ENCODE measurements at regions of chr18 and their contacts with region 1.

Region 1: GRCh38 chr18:5057386-5058348 is 139.4 kb downstream of the AKAIN1 start:
- DNase-seq: peak; percentile 32
- ATAC-seq: peak; percentile 79
- H3K4me3 ChIP-seq: no peak overlapping the region
- H3K27ac ChIP-seq: no peak overlapping the region
- H3K4me1 ChIP-seq: no peaks in the 10 kb centered on the region; the same call in 1 of the 2 replicates
- H3K27me3 ChIP-seq: no peaks in the 10 kb centered on the region
- CTCF ChIP-seq: peak; percentile 72 to 93 (median 74); a peak in 4 of 6 replicates
- EP300 ChIP-seq: no peak
- POLR2A ChIP-seq: no peak
- RAD21 ChIP-seq: peak; percentile 92

Region 2: GRCh38 chr18:3771121-3771971 is 1286.3 kb before region 1 on chr18:
- CTCF ChIA-PET with region 1: interaction called, 32 read pairs
- POLR2A ChIA-PET with region 1: no interaction called
- RAD21 ChIA-PET with region 1: interaction called, 38 read pairs
- SMC1A ChIA-PET with region 1: interaction called, 14 read pairs
- in situ Hi-C with region 1: no loop called
- intact Hi-C with region 1: loop called (anchors 2 kb)
- DNase-seq: no peak
- ATAC-seq: peak; percentile 99
- H3K4me3 ChIP-seq: no peak overlapping the region
- H3K27ac ChIP-seq: no peak overlapping the region
- H3K4me1 ChIP-seq: no peaks in the 10 kb centered on the region
- H3K27me3 ChIP-seq: no peaks in the 10 kb centered on the region
- CTCF ChIP-seq: peak; percentile 79 to 87 (median 87)
- EP300 ChIP-seq: no peak
- POLR2A ChIP-seq: no peak
- RAD21 ChIP-seq: peak; percentile 72

Region 3: GRCh38 chr18:4181882-4182568 is 875.6 kb before region 1 on chr18:
- CTCF ChIA-PET with region 1: interaction called, 4 read pairs
- POLR2A ChIA-PET with region 1: no interaction called
- RAD21 ChIA-PET with region 1: interaction called, 4 read pairs
- SMC1A ChIA-PET with region 1: interaction called, 5 read pairs
- in situ Hi-C with region 1: no loop called
- intact Hi-C with region 1: loop called (anchors 5 kb)
- DNase-seq: no peak
- ATAC-seq: peak; percentile 84
- H3K4me3 ChIP-seq: no peak overlapping the region
- H3K27ac ChIP-seq: no peak overlapping the region
- H3K4me1 ChIP-seq: no peaks in the 10 kb centered on the region
- H3K27me3 ChIP-seq: no peaks in the 10 kb centered on the region
- CTCF ChIP-seq: peak in 1 of 3 experiments; percentile 35; a peak in 2 of 6 replicates
- EP300 ChIP-seq: no peak
- POLR2A ChIP-seq: no peak
- RAD21 ChIP-seq: peak; percentile 38

Region 4: DNA sequence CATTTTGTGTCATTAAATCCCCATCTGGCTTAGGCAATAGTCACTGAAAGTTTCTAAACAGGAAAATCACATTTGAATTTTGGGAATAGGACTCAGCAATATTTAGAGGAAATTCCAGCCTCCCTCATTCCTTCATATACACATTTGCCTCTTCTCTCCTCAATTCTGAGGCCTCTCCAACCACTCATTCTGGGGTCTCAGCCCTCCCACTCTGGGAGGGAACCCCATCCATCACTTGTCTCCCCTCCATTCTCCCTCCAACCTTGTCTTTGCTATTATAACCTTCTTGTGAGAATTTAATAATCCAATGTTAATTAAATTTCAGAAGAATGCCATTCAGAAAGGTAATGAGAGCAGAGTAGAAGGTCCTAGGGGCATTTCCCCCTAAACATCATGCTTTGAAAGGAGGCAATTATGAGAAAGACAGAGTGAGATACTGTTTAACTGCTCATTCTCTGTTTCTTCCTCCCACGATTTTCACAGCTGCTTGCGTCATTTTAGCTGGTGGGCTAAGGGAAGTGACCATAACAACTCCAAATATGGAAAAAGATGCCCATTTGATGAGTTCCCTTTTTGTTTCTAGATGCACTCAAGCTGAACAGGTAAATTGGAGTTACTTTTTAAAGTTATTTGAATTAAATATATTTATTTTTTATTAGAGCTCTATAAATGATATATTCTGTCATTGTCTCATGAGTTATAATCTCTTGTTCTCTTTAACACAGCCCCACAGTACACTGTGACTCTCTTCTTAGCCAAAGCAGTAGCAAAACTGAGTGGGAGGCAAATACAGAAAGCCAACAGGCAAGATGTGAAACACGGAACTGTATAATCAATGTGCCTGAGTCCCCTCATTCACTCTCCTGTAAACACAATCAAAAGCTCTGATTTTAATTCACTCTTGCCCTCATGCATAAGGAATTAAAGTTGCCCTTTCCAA is 737.7 kb before region 1 on chr18:
- CTCF ChIA-PET with region 1: no interaction called
- POLR2A ChIA-PET with region 1: no interaction called
- RAD21 ChIA-PET with region 1: interaction called, 6 read pairs
- SMC1A ChIA-PET with region 1: no interaction called
- in situ Hi-C with region 1: no loop called
- intact Hi-C with region 1: loop called (anchors 10 kb)
- DNase-seq: peak; percentile 64
- ATAC-seq: peak; percentile 91
- H3K4me3 ChIP-seq: no peak overlapping the region
- H3K27ac ChIP-seq: no peak overlapping the region; the same call in 1 of the 2 replicates
- H3K4me1 ChIP-seq: no peaks in the 10 kb centered on the region
- H3K27me3 ChIP-seq: no peaks in the 10 kb centered on the region
- CTCF ChIP-seq: no peak
- EP300 ChIP-seq: peak; percentile 88 to 90; a peak in 3 of 4 replicates
- POLR2A ChIP-seq: no peak
- RAD21 ChIP-seq: no peak

Region 5: GRCh38 chr18:4455113-4455811 is 602.4 kb before region 1 on chr18 and contains the start of gene DLGAP1:
- CTCF ChIA-PET with region 1: interaction called, 26 read pairs
- POLR2A ChIA-PET with region 1: no interaction called
- RAD21 ChIA-PET with region 1: interaction called, 22 read pairs
- SMC1A ChIA-PET with region 1: interaction called, 23 read pairs
- in situ Hi-C with region 1: no loop called
- intact Hi-C with region 1: loop called (anchors 1 kb)
- DNase-seq: no peak
- ATAC-seq: peak; percentile 85
- H3K4me3 ChIP-seq: no peak within 1 kb of the TSS
- H3K27ac ChIP-seq: no peak within 1 kb of the TSS
- H3K4me1 ChIP-seq: no peaks in the 10 kb centered on the region
- H3K27me3 ChIP-seq: no peaks in the 10 kb centered on the region; a peak in 1 of 4 replicates
- CTCF ChIP-seq: peak in 1 of 3 experiments; percentile 23; a peak in 1 of 6 replicates
- EP300 ChIP-seq: no peak
- POLR2A ChIP-seq: 0 out of 2 replicates have a peak, but pooled peaks have one; percentile 23
- RAD21 ChIP-seq: no peak
- polyA plus RNA-seq, gene DLGAP1: 0.23 to 0.60 TPM

Region 6: DNA sequence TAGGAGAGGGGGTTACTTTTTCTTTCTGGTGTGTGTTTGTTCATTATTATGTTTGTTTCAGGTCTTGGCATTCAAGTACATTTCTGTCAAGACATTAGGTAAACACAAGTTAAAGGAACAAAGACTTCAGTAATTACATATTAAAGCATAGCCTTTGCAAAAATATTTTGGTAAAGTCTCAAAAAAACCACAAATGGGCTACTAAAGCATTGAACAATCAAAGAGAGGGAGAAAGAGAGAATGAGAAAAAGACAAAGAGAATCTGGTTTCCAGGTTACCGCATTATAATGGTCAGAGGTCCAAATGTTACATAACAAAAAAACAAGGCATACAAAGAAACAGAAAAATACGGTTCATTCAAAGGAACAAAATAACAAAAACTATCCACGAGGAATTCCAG is 188.6 kb before region 1 on chr18:
- CTCF ChIA-PET with region 1: no interaction called
- POLR2A ChIA-PET with region 1: no interaction called
- RAD21 ChIA-PET with region 1: no interaction called
- SMC1A ChIA-PET with region 1: no interaction called
- in situ Hi-C with region 1: no loop called
- intact Hi-C with region 1: no loop called
- DNase-seq: no peak
- ATAC-seq: no peak
- H3K4me3 ChIP-seq: no peak overlapping the region
- H3K27ac ChIP-seq: no peak overlapping the region
- H3K4me1 ChIP-seq: no peaks in the 10 kb centered on the region
- H3K27me3 ChIP-seq: no peaks in the 10 kb centered on the region
- CTCF ChIP-seq: no peak
- EP300 ChIP-seq: no peak
- POLR2A ChIP-seq: no peak
- RAD21 ChIP-seq: no peak

Region 7: DNA sequence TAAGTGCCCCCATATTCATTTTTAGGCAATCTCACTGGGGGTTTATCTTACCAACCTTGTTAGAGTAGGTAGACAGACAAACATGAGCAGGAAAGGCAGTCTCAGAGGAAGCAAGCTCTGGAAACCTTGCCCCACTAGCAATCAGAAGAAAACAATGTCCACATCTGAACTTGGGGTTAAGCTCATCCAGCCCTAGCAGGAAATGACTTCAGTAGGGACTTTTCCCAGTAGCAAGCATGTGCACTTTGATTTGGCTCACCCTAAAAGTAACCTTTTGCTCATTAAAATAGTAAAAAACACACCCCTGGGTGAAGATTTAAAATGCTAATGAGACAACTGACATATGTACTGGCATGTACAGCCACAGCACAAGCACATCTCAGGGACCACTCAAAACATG is 36.1 kb before region 1 on chr18:
- CTCF ChIA-PET with region 1: interaction called, 26 read pairs
- POLR2A ChIA-PET with region 1: no interaction called
- RAD21 ChIA-PET with region 1: interaction called, 19 read pairs
- SMC1A ChIA-PET with region 1: interaction called, 48 read pairs
- in situ Hi-C with region 1: no loop called
- intact Hi-C with region 1: no loop called
- DNase-seq: no peak
- ATAC-seq: peak; percentile 83
- H3K4me3 ChIP-seq: no peak overlapping the region
- H3K27ac ChIP-seq: no peak overlapping the region
- H3K4me1 ChIP-seq: no peaks in the 10 kb centered on the region
- H3K27me3 ChIP-seq: no peaks in the 10 kb centered on the region
- CTCF ChIP-seq: no peak
- EP300 ChIP-seq: no peak
- POLR2A ChIP-seq: no peak
- RAD21 ChIP-seq: no peak

Measured in GM12878 (cell line).